Dendritic cell treated with granulocyte-macrophage colony-stimulating factor and Interleukin-4, amounts not matched to agents 40 ng/mL and 50 ng/mL, for 4 days (primary cell): ENCODE measurements at regions of chr9 and their contacts with region 1.

Region 1: GRCh38 chr9:122125158-122125508 is 32.0 kb upstream of the TTLL11 start:
- H3K4me3 Mint-ChIP-seq: no peak overlapping the region
- H3K27ac Mint-ChIP-seq: no peak overlapping the region
- H3K4me1 Mint-ChIP-seq: peaks cover 7% of the 10 kb centered on the region
- H3K27me3 Mint-ChIP-seq: peaks cover 52% of the 10 kb centered on the region

Region 2: GRCh38 chr9:122099271-122099869 is 25.8 kb before region 1 on chr9:
- intact Hi-C with region 1: loop called (anchors 1 kb)
- H3K4me3 Mint-ChIP-seq: peak overlapping the region; percentile 37
- H3K27ac Mint-ChIP-seq: no peak overlapping the region
- H3K4me1 Mint-ChIP-seq: peaks cover 13% of the 10 kb centered on the region
- H3K27me3 Mint-ChIP-seq: peaks cover 20% of the 10 kb centered on the region

Region 3: DNA sequence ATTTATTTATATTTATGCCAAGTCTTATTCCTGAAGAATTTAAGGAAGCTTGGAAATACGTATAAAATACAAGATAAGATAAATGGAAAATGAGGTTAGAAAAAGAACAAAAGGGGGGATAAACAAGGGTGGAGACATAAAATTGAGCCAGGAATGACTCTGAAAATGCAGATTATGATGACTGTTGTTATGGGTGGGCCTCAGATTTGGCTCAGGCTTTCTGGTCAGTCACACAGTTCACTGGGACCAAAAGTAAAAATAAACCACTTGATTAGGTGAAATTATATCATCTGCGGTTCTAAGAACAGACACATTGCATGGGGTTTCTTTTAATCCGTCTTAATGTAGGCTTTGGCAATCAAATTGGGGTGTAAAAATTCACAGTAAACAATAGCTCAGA is 301.6 kb after region 1 on chr9:
- intact Hi-C with region 1: no loop called
- H3K4me3 Mint-ChIP-seq: no peak overlapping the region
- H3K27ac Mint-ChIP-seq: no peak overlapping the region
- H3K4me1 Mint-ChIP-seq: no peaks in the 10 kb centered on the region
- H3K27me3 Mint-ChIP-seq: peaks cover 6% of the 10 kb centered on the region

Region 4: GRCh38 chr9:122453677-122454135 is 328.6 kb after region 1 on chr9:
- intact Hi-C with region 1: loop called (anchors 1 kb)
- H3K4me3 Mint-ChIP-seq: no peak overlapping the region
- H3K27ac Mint-ChIP-seq: no peak overlapping the region
- H3K4me1 Mint-ChIP-seq: no peaks in the 10 kb centered on the region
- H3K27me3 Mint-ChIP-seq: peaks cover 12% of the 10 kb centered on the region

Region 5: DNA sequence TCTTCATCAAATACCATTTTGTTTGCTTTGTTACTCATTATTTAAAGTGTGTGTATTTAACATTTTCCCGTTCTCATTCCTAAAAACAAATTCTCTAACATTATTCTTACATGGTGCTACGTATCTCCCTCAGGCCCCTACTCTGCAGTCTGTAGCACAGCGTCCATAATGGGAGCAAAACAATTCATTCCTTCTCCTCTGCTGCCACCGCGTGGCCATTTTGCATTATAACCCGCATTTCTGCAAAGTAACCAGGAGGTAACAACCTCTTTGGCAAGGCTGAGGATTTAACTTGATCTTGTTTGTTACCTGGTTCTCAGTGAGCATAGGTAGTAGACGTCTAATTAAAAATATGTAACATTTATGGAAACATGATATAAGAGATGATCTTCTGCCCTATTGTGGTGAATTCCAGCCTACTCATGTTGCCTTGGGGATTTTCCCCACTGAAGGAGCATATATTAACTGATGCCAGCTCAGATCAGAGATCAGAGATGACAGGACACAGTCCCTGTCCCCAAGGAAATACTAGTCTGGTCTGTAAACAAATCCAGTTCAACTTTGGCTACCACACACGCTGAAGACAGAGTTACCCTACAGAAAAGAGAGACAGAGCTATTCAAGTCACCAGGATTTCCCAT is 685.3 kb after region 1 on chr9:
- intact Hi-C with region 1: loop called (anchors 1 kb)
- H3K4me3 Mint-ChIP-seq: no peak overlapping the region
- H3K27ac Mint-ChIP-seq: no peak overlapping the region
- H3K4me1 Mint-ChIP-seq: peaks cover 11% of the 10 kb centered on the region
- H3K27me3 Mint-ChIP-seq: no peaks in the 10 kb centered on the region